ENCODE measurements at regions of chr10 and their contacts with region 1.

Region 1: GRCh38 chr10:63976538-63976937 is 455.3 kb downstream of the REEP3 start:
- DNase-seq: peak in 1 of 2 donors; percentile 22
- ATAC-seq: peak in 6 of 8 donors; percentile 20 to 82 (median 74)
- H3K4me3 ChIP-seq: no peak overlapping the region
- H3K27ac ChIP-seq: no peak overlapping the region
- H3K4me1 ChIP-seq: no peaks in the 10 kb centered on the region
- H3K27me3 ChIP-seq: no peaks in the 10 kb centered on the region
- CTCF ChIP-seq: peak in 8 of 9 donors; percentile 10 to 57 (median 43)

Region 2: DNA sequence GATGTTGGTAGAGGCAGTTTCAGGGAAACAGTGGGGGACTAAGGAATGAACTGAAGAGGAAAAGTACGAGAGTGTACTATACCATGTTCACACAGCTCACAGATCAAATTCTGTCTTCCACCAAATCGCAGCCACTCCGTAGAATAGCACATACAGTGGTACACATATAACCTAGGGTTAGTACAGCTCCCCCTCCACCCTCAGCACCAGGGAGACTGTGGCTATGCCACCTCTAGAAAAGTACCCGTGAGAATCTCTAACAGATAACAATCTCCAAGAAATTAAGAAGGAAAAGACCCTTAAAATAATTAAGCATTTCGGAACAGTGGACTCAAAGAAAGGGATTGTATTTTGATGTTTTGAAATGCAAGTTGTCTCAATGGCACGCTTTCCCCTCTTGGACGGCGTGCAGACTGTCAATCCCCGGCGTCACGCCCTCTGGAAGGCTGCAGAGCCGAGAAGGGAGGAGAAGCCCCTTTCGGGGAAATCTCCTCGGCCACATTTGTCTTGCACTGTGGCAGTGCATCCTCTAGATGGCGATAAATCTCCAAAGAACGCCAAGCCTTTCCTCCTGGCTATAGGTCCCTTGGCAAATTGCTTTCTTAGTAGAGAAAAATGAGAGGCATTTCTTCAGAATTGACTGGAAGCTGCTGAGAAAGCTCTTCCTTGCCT is 110.3 kb before region 1 on chr10:
- intact Hi-C with region 1: loop called in 6 of 10 experiments (anchors 5 to 10 kb)
- DNase-seq: peak; percentile 21 to 25
- ATAC-seq: peak in 7 of 8 donors; percentile 43 to 79 (median 61)
- H3K4me3 ChIP-seq: peak overlapping the region in 3 of 10 donors; percentile 8 to 15 (median 11)
- H3K27ac ChIP-seq: no peak overlapping the region
- H3K4me1 ChIP-seq: peaks cover 0 to 13% (median 9%) of the 10 kb centered on the region in 9 donors
- H3K27me3 ChIP-seq: peaks cover 0 to 38% (median 23%) of the 10 kb centered on the region in 7 donors
- CTCF ChIP-seq: peak; percentile 48 to 87 (median 82)

Region 3: DNA sequence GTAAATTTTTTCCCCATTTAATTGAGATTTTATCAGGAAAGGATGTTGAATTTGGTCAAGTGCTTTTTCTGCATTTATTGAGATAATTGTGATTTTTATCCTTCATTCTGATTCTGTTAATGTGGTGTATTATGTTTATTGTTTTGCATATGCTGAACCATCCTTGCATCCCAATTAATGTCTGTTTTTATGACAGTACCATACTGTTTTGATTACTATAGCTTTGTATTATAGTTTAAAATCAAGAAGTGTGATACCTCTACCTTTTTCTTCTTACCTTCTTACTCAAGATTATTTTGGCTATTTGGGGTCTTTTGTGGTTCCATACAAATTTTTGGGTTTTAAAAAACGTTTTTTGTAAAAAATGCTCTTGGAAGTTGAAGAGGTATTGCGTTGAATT is 98.1 kb before region 1 on chr10:
- intact Hi-C with region 1: loop called in 6 of 10 experiments (anchors 2 to 10 kb)
- DNase-seq: no peak
- ATAC-seq: no peak
- H3K4me3 ChIP-seq: no peak overlapping the region
- H3K27ac ChIP-seq: no peak overlapping the region
- H3K4me1 ChIP-seq: no peaks in the 10 kb centered on the region
- H3K27me3 ChIP-seq: no peaks in the 10 kb centered on the region
- CTCF ChIP-seq: no peak

Region 4: DNA sequence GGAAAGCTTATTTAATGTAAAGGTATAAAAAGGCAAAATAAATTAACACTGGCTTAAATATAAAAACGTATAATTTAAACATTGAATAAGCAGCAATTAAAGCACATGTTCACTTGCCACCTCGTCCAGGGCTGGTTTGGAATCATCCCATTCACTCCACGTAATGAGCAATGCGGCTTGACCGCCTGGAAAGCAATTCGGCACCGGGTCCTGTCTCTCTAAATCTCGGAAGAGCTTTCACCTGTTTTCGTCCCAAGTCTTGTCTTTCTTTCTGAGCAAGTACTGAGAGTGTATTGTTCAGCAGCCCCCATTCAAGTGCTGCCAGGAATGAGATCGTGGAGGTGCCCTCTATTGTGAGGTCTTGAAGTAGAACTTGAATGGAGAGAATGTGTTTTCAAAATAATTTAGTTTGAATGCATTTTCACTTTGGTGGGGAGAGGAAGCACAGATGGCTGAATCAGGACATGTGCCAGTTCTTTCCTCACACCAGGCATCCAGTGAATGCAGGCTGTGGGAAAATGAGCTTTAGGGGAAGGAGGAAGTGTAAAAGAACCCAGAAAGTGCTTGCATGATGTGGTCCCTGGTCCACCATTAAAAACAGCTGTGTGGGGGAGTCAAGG is 59.9 kb after region 1 on chr10:
- intact Hi-C with region 1: no loop called
- DNase-seq: no peak
- ATAC-seq: peak in 4 of 8 donors; percentile 28 to 46 (median 40)
- H3K4me3 ChIP-seq: peak overlapping the region in 5 of 10 donors; percentile 13 to 32 (median 24)
- H3K27ac ChIP-seq: peak overlapping the region in 3 of 10 donors; percentile 6 to 40 (median 29)
- H3K4me1 ChIP-seq: peaks cover 0 to 25% (median 14%) of the 10 kb centered on the region in 9 donors
- H3K27me3 ChIP-seq: peaks cover 0 to 10% (median 0%) of the 10 kb centered on the region in 7 donors
- CTCF ChIP-seq: no peak

Measured in heart right ventricle (tissue), 16 donors.